ENCODE measurements at regions of chr12 and their contacts with region 1.

Region 1: GRCh38 chr12:53352331-53353256 is 16.4 kb upstream of the SP7 start:
- DNase-seq: peak; percentile 79
- CTCF ChIP-seq: peak; percentile 81

Region 2: DNA sequence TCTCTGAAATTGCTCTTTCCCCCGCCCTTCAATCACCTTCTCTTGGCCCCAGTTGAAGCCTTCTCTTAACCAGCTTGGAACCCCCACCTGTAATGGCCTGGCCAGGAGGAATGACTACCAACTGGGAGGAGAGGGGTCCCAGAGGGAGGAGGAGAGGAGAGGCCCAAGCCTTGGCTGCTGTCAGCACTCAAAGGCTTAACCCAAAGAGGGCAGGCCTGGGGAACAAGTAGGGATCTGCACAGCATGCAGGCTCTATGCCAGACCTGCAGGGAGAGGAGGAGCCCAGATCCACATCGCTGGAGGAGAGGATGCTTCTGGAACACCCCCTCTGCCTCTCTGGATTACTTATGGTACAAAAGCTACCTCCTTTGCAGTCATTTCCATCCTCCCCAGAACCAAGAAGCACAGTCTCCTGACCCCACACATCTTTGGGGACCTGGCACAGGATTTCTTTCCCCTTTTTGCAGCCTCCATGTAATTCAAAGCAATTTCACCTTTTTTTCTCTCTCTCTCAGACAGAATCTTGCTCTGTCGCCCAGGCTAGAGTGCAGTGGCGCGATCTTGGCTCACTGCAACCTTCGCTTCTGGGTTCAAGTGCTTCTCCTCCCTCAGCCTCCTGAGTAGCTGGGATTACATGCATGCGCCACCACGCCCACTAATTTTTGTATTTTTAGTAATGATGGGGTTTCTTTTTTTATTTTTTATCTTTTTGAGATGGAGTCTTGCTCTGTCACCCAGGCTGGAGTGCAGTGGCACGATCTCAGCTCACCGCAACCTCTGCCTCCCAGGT is 126.8 kb before region 1 on chr12:
- CTCF ChIA-PET with region 1: no interaction called
- POLR2A ChIA-PET with region 1: no interaction called
- DNase-seq: no peak
- CTCF ChIP-seq: no peak

Region 3: GRCh38 chr12:53336181-53336681 is 16.4 kb before region 1 on chr12 and contains the start of gene SP7:
- CTCF ChIA-PET with region 1: interaction called, 442 read pairs
- POLR2A ChIA-PET with region 1: no interaction called
- DNase-seq: no peak
- CTCF ChIP-seq: no peak

Region 4: DNA sequence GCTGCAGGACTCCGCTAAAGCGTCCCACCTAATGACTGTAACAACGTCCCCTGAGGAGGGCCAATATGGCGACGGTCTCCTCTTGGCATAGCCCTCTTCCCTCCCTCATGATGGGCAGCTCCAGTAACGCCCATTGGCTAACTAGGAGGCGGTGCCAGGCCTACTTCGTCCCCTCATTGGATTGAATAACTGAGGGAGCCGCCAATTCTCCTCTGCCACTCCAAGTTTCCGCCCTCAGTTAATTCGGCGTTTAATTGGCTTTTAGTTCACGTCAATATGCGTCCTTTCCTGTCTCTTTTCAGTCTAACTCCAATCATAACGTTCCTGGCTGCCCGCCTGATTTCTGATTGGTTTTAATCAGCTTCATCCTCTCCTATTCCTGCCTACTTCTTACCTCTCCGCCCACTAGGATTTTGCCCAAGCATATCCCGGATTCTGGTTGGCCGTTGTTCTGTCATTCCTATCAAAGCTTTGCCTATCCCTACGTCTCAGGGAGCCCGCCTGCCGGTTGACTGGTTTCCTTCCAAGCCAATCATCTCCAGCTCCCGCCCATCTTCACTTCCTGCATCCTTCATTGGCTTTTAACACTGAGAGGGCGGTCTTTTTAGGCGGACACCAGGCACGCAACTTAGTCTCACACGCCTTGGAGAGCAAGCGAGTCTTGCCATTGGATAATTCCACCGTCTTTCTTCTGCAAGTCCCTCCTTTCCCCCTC is 27.0 kb after region 1 on chr12:
- CTCF ChIA-PET with region 1: interaction called, 51 read pairs
- POLR2A ChIA-PET with region 1: no interaction called
- DNase-seq: peak; percentile 88
- CTCF ChIP-seq: no peak

Region 5: GRCh38 chr12:53427905-53428594 is 75.5 kb after region 1 on chr12:
- CTCF ChIA-PET with region 1: interaction called, 381 read pairs
- POLR2A ChIA-PET with region 1: no interaction called
- DNase-seq: no peak
- CTCF ChIP-seq: no peak

Region 6: GRCh38 chr12:53500776-53501614 is 148.4 kb after region 1 on chr12 and contains the start of gene TARBP2:
- CTCF ChIA-PET with region 1: interaction called, 12 read pairs
- POLR2A ChIA-PET with region 1: no interaction called
- DNase-seq: peak; percentile 96
- CTCF ChIP-seq: no peak

Region 7: DNA sequence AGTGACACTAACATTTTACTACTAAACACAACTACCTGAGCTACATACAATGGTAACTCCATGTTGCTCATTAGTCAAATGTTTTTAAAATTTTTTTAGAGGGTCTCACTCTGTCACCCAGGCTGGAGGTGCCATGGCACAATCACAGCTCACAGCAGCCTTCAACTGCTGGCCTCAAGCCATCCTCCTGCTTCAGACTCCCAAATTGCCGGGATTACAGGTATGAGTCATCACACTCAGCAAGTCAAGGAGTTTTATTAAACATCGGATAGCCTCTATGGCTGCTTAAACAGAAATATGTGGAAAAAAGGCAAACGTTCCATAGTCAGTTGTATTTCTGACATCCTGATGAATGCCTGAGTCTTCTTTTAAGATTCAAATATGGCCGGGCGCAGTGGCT is 165.8 kb after region 1 on chr12:
- CTCF ChIA-PET with region 1: interaction called, 11 read pairs
- POLR2A ChIA-PET with region 1: no interaction called
- DNase-seq: no peak
- CTCF ChIP-seq: no peak

Measured in GM10248 (cell line).